Activated CD4-positive, alpha-beta memory T cell treated with anti-CD3 and anti-CD28 coated beads for 36 hours (primary cell): ENCODE measurements at regions of chr17 and their contacts with region 1.

Region 1: DNA sequence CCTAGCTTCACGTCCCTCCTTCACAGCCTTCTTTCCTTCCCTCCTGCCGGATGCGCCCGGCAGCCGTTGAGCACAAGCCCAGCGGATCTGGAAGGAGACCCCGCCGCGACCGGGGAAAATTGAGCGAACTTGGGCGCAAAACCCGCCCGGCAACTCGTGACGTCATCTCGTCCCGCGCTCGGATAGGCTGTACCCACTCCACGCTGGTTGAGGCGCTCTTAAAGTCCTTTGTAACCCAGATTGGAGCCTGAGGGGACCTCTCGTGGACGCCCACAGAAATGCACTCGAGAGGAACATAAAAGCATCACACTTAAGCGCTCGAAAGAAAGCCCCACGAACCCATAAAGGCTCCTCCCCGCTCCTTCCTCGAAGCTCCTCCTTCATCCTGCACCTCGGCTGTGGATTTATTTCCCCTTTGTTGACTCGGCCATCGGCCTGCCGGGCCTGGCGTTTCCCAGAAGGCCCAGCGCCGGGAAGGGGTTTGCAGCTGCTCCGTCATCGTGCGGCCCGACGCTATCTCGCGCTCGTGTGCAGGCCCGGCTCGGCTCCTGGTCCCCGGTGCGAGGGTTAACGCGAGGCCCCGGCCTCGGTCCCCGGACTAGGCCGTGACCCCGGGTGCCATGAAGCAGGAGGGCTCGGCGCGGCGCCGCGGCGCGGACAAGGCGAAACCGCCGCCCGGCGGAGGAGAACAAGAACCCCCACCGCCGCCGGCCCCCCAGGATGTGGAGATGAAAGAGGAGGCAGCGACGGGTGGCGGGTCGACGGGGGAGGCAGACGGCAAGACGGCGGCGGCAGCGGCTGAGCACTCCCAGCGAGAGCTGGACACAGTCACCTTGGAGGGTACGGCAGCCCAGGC is at the start of gene PSMD3:
- DNase-seq: peak; percentile 99
- H3K4me3 Mint-ChIP-seq: peak within 1 kb of the TSS; percentile 95
- H3K27ac Mint-ChIP-seq: peak within 1 kb of the TSS; percentile 88
- H3K4me1 Mint-ChIP-seq: peaks cover 30% of the 10 kb centered on the region
- H3K27me3 Mint-ChIP-seq: peaks cover 6% of the 10 kb centered on the region
- total RNA-seq, gene PSMD3: 120 to 124 TPM

Region 2: GRCh38 chr17:39872751-39873150 is 107.8 kb before region 1 on chr17:
- CTCF ChIA-PET with region 1: interaction called, 41 read pairs
- POLR2A ChIA-PET with region 1: no interaction called
- intact Hi-C with region 1: loop called (anchors 1 kb)
- DNase-seq: no peak
- H3K4me3 Mint-ChIP-seq: no peak overlapping the region
- H3K27ac Mint-ChIP-seq: peak overlapping the region; percentile 49
- H3K4me1 Mint-ChIP-seq: peaks cover 16% of the 10 kb centered on the region
- H3K27me3 Mint-ChIP-seq: no peaks in the 10 kb centered on the region

Region 3: GRCh38 chr17:39939588-39940419 is 40.8 kb before region 1 on chr17:
- CTCF ChIA-PET with region 1: interaction called, 8 read pairs
- POLR2A ChIA-PET with region 1: interaction called, 3 read pairs
- intact Hi-C with region 1: loop called (anchors 1 kb)
- DNase-seq: peak; percentile 78
- H3K4me3 Mint-ChIP-seq: no peak overlapping the region
- H3K27ac Mint-ChIP-seq: peak overlapping the region; percentile 46
- H3K4me1 Mint-ChIP-seq: peaks cover 19% of the 10 kb centered on the region
- H3K27me3 Mint-ChIP-seq: no peaks in the 10 kb centered on the region

Region 4: DNA sequence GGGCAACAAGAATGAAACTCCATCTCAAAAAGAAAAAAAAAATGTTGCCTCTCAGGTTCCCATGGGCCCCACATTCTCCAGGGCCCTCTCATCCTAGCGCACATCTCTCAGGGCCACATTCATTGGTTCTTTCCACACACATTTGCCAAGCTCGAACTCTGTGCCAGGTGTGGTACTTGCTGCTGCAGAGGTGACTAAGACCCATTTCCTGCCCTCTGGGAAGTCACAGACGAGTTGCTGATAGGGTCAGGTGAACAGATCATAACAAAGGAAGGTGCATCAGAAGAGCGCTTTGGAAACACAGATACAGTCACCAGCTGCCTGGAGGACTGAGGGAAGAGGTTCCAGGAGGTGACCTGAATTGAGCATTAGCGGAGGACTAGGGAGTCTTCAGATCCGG is 16.8 kb before region 1 on chr17:
- CTCF ChIA-PET with region 1: interaction called, 77 read pairs
- POLR2A ChIA-PET with region 1: no interaction called
- intact Hi-C with region 1: loop called (anchors 1 kb)
- DNase-seq: peak; percentile 53
- H3K4me3 Mint-ChIP-seq: no peak overlapping the region
- H3K27ac Mint-ChIP-seq: peak overlapping the region; percentile 40
- H3K4me1 Mint-ChIP-seq: peaks cover 24% of the 10 kb centered on the region
- H3K27me3 Mint-ChIP-seq: no peaks in the 10 kb centered on the region